ENCODE measurements at regions of chr15 and their contacts with region 1.

Region 1: GRCh38 chr15:78241007-78241406 is 6.6 kb upstream of the ACSBG1 start:
- DNase-seq: peak; percentile 87 to 90
- ATAC-seq: peak; percentile 89 to 96 (median 93)
- H3K4me3 ChIP-seq: no peak overlapping the region
- H3K27ac ChIP-seq: no peak overlapping the region
- H3K4me1 ChIP-seq: peaks cover 0 to 12% (median 8%) of the 10 kb centered on the region in 9 donors
- H3K27me3 ChIP-seq: no peaks in the 10 kb centered on the region
- CTCF ChIP-seq: peak; percentile 82 to 94 (median 91)

Region 2: DNA sequence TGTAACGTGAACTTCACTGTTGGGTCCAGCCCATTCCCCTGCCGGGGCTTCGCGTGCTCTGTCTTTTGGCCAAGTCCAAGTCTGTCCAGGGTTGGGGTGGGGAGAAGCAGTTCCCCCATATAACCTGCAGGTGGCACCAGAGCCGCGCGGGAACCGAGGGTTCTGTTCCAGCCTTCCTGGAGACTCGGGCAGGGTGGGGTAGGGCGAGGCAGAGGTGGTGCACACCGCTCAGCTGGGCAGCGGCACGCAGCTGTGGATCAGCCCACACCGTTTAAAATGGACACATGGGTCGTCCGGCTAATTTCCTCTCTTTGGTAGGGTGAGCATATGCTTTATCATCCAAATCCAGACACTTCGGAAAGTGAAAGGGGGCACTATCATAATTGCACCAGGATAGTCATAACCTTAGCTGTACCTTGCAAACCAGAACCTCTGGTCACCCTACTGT is 281.6 kb before region 1 on chr15:
- intact Hi-C with region 1: loop called in 7 of 10 experiments (anchors 1 to 5 kb)
- DNase-seq: peak; percentile 75 to 79
- ATAC-seq: peak; percentile 96 to 98 (median 97)
- H3K4me3 ChIP-seq: peak overlapping the region in 5 of 10 donors; percentile 24 to 38 (median 27)
- H3K27ac ChIP-seq: no peak overlapping the region
- H3K4me1 ChIP-seq: peaks cover 0 to 8% (median 4%) of the 10 kb centered on the region in 9 donors
- H3K27me3 ChIP-seq: no peaks in the 10 kb centered on the region
- CTCF ChIP-seq: peak; percentile 96 to 99 (median 97)

Region 3: GRCh38 chr15:77966540-77967290 is 274.3 kb before region 1 on chr15:
- intact Hi-C with region 1: loop called in 4 of 10 experiments (anchors 5 kb)
- DNase-seq: peak in 1 of 2 donors; percentile 58
- ATAC-seq: peak; percentile 66 to 88 (median 80)
- H3K4me3 ChIP-seq: no peak overlapping the region
- H3K27ac ChIP-seq: no peak overlapping the region
- H3K4me1 ChIP-seq: peaks cover 0 to 7% (median 0%) of the 10 kb centered on the region in 9 donors
- H3K27me3 ChIP-seq: no peaks in the 10 kb centered on the region
- CTCF ChIP-seq: peak; percentile 75 to 91 (median 85)

Region 4: GRCh38 chr15:78131295-78132061 is 109.5 kb before region 1 on chr15 and contains the start of gene CIB2:
- intact Hi-C with region 1: loop called in 5 of 10 experiments (anchors 5 kb)
- DNase-seq: peak; percentile 60 to 81
- ATAC-seq: peak; percentile 86 to 95 (median 90)
- H3K4me3 ChIP-seq: peak within 1 kb of the TSS; percentile 56 to 95 (median 80)
- H3K27ac ChIP-seq: peak within 1 kb of the TSS; percentile 71 to 91 (median 84)
- H3K4me1 ChIP-seq: peaks cover 0 to 13% (median 10%) of the 10 kb centered on the region in 9 donors
- H3K27me3 ChIP-seq: no peaks in the 10 kb centered on the region
- CTCF ChIP-seq: peak; percentile 63 to 94 (median 85)
- total RNA-seq, gene CIB2: 4.0 to 32.3 (median 17.1) TPM

Region 5: DNA sequence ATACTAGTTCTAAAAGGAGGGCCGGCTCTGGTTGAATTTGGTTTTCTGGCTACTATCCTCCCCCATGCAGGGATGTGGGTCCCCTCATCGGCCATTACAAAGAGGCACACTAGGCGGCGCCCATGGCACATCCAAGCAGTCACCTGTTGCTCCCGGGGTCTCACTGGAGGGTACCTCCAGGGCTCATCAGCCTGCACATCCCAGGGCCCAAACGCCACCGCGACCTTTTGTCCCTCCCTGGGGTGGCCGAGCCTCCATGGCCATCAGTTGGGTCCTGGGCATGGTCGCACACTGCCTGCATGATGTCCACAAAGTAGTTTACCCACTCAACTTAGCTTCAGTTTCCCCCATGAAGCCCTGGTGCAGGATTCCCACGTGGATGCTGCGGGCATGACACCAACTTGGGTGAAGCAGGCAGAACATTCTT is 63.5 kb before region 1 on chr15:
- intact Hi-C with region 1: loop called in 9 of 10 experiments (anchors 1 to 5 kb)
- DNase-seq: peak; percentile 32 to 43
- ATAC-seq: peak in 6 of 8 donors; percentile 36 to 77 (median 56)
- H3K4me3 ChIP-seq: no peak overlapping the region
- H3K27ac ChIP-seq: no peak overlapping the region
- H3K4me1 ChIP-seq: peaks cover 0 to 9% (median 0%) of the 10 kb centered on the region in 9 donors
- H3K27me3 ChIP-seq: no peaks in the 10 kb centered on the region
- CTCF ChIP-seq: peak; percentile 20 to 77 (median 66)

Region 6: DNA sequence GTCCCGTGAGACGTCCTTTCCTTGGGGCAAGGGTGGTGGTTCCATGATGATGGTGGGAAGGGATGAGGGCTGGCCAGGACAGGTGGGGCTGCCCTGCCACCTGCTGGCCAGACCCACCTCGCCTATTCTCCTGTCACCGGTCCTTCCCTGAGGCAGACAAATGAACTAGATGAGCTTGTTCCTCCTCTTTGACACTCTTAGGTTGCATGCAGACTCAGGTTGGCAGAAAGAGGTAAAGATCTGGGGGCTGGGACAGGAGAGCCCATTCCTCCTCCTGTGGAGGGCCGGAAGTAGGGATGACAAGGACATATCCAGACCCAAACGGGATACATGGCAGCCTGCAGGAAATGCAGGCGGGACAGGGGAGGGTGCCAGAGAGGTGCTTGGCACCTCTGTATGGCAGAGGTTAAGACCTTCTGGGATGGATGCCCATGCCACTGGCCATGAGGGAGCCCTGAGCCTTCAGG is 45.2 kb before region 1 on chr15:
- intact Hi-C with region 1: loop called in 3 of 10 experiments (anchors 5 kb)
- DNase-seq: peak in 1 of 2 donors; percentile 2
- ATAC-seq: peak in 5 of 8 donors; percentile 70 to 82 (median 78)
- H3K4me3 ChIP-seq: no peak overlapping the region
- H3K27ac ChIP-seq: no peak overlapping the region
- H3K4me1 ChIP-seq: no peaks in the 10 kb centered on the region
- H3K27me3 ChIP-seq: no peaks in the 10 kb centered on the region
- CTCF ChIP-seq: peak; percentile 34 to 80 (median 71)

Measured in heart right ventricle (tissue), 16 donors.